Calu3 (cell line): ENCODE measurements at regions of chr18 and their contacts with region 1.

Region 1: DNA sequence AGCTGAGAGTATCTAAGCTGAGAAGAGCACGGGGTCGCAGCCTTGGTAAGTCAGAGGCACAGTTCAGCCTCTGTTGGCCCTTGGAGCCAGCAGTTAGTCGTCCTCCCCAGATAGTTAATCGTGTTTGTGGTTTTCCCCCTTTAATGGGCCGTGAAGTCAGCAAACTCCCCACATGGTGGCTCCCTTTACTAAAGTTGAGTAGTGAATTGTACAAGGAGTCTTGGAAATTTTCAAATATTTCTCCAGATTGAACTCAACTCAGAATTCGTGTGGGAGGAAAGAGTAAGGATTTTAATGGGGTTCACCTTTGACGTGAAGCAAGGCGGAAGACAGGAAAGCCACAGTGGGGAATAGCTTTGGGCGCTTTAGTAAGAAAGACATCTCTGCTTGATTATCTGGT is 2.4 kb upstream of the ADCYAP1 start:
- DNase-seq: peak; percentile 12
- H3K4me3 Mint-ChIP-seq: no peak overlapping the region
- H3K27ac Mint-ChIP-seq: no peak overlapping the region
- H3K4me1 Mint-ChIP-seq: no peaks in the 10 kb centered on the region
- H3K27me3 Mint-ChIP-seq: peaks cover 81% of the 10 kb centered on the region
- CTCF ChIP-seq: no peak

Region 2: GRCh38 chr18:744832-745597 is 157.2 kb before region 1 on chr18:
- CTCF ChIA-PET with region 1: no interaction called
- intact Hi-C with region 1: no loop called
- DNase-seq: no peak
- H3K4me3 Mint-ChIP-seq: no peak overlapping the region
- H3K27ac Mint-ChIP-seq: no peak overlapping the region
- H3K4me1 Mint-ChIP-seq: no peaks in the 10 kb centered on the region
- H3K27me3 Mint-ChIP-seq: no peaks in the 10 kb centered on the region
- CTCF ChIP-seq: no peak

Region 3: DNA sequence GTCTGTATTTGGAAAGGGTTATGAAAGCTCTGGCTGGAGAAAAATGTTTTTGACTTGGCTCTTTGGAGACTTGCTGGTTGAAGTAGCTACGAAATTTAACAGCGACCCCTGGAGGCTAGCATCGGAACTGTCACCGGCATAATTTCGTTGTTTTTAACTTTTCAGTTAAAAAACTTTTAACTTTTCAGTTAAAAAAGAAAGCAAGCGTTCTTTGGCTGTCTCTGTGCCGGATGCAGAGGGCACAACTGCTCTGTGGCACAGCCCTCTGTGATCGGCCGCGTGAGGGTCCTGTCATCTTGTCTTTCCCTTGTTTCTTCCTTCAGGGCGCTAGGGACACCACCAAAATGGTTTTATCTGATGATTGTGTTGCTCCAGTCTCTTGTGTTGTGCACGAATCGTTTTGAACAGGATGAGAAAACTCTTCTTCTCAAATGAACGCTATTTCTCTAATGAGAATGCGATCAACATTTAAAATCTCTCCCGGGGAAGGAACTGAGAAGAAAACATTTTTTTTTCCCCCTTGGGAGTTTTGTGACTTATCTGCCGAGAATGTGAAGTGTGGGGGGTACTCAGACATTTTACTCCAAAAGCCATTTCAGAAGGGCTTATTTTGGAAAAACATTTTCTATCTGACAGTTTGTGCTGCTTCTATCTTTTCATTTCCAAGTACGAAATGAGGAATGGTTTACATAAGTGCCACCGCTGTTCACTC is 59.6 kb after region 1 on chr18:
- CTCF ChIA-PET with region 1: no interaction called
- intact Hi-C with region 1: loop called (anchors 1 kb)
- DNase-seq: peak; percentile 47
- H3K4me3 Mint-ChIP-seq: no peak overlapping the region
- H3K27ac Mint-ChIP-seq: no peak overlapping the region
- H3K4me1 Mint-ChIP-seq: peaks cover 8% of the 10 kb centered on the region
- H3K27me3 Mint-ChIP-seq: peaks cover 74% of the 10 kb centered on the region
- CTCF ChIP-seq: peak; percentile 92